Activated CD8-positive, alpha-beta T cell treated with anti-CD3 and anti-CD28 coated beads, Interleukin-2, amount 10 ng/mL, durations not matched to agents 7 days and 5 days (primary cell): ENCODE measurements at regions of chr3 and their contacts with region 1.

Region 1: GRCh38 chr3:128133273-128134084 is 9.9 kb upstream of the RUVBL1 start:
- DNase-seq: peak; percentile 60
- ATAC-seq: peak; percentile 75
- H3K4me3 Mint-ChIP-seq: no peak overlapping the region
- H3K27ac Mint-ChIP-seq: no peak overlapping the region
- H3K4me1 Mint-ChIP-seq: no peaks in the 10 kb centered on the region
- H3K27me3 Mint-ChIP-seq: peaks cover 19% of the 10 kb centered on the region

Region 2: DNA sequence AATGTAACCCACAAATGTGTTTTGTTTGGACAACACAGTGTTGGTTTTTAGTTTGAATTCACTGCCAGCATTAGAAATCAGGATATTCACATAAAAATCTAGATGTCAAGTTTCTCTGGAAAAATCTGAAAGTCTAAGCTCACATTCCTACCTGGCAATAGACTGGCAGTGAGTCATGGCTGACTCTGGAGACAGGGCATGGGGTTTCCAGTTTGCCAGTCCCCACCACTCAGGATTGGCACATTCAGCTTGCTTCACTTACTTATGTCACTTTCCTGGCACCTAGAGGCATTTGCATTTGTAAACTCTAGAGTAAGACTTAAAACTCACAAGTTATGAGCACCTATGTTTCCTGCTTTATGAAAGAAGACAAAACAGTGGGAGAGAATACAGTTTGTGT is 100.4 kb before region 1 on chr3:
- CTCF ChIA-PET with region 1: no interaction called
- POLR2A ChIA-PET with region 1: no interaction called
- DNase-seq: no peak
- ATAC-seq: no peak
- H3K4me3 Mint-ChIP-seq: no peak overlapping the region
- H3K27ac Mint-ChIP-seq: no peak overlapping the region
- H3K4me1 Mint-ChIP-seq: no peaks in the 10 kb centered on the region
- H3K27me3 Mint-ChIP-seq: peaks cover 3% of the 10 kb centered on the region

Region 3: DNA sequence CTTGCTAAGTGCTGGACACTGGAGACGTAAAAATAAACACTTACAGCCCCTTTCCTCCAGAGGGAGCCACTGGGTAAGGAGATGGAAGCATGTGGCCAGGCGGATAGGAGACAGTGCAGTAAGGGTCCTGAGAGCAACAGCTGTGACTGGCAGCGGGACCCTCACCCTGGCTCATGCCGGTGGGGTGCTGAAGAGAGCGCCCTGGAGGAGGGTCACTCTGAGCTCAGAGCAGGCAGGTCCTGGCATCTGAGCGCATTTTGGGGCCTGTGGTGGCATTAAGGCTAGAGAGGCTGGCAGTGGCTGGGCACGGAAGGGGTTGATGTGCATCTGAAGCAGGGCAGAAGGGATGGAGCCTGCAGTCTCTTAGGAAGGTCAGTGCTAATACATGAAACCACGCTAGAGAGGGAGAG is 65.3 kb before region 1 on chr3:
- CTCF ChIA-PET with region 1: interaction called, 17 read pairs
- POLR2A ChIA-PET with region 1: no interaction called
- DNase-seq: peak; percentile 44
- ATAC-seq: peak; percentile 50
- H3K4me3 Mint-ChIP-seq: no peak overlapping the region
- H3K27ac Mint-ChIP-seq: no peak overlapping the region
- H3K4me1 Mint-ChIP-seq: no peaks in the 10 kb centered on the region
- H3K27me3 Mint-ChIP-seq: no peaks in the 10 kb centered on the region

Region 4: DNA sequence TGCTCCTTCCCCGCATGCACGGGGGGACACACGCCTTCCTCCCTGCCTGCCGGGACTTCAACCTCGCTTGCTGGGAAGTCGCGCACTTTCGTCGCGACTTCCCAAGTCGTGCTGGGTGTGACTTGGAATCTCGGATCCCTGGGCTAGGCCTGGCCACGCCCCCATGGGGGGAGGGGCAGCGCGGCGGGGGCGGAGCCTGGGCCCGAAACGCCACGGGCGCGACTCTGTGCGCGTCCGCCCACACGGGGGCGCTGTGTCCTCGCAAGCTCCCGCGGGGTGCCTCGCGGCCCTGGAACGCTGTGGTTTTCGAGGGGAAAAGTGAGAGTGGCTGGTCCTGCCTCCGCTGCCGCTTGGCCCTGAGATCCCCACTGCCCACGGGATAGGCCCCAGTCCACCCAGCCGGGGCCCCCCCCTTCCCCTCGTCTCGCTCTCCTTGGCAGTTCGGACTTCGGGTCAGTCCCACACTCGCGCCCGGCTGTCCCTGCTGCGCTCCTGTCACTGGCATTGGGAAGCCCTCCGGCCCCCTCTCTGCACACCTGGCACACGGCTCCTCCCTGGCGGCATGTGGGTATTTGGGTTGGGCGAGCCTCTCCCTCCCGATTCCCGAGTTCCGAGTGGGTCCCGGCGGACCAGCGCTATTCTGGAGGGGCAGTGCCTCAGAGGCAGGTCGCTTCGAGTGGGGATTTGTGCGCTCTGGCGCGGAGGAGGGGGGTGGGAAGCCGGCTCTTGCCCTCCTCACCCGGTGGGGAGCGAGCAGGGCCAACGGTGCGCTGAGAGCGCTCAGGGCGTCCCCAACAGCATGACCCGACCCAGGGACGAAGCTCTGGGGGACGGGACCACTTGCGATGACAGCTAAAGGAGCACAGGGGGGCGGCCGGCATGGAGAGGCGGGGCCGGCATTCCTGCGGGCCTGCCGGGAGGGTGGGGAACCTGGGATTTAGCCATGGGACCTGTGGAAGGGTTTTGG is 57.7 kb before region 1 on chr3:
- CTCF ChIA-PET with region 1: interaction called, 18 read pairs
- POLR2A ChIA-PET with region 1: no interaction called
- DNase-seq: peak; percentile 84
- ATAC-seq: peak; percentile 82
- H3K4me3 Mint-ChIP-seq: peak overlapping the region; percentile 40
- H3K27ac Mint-ChIP-seq: no peak overlapping the region
- H3K4me1 Mint-ChIP-seq: peaks cover 19% of the 10 kb centered on the region
- H3K27me3 Mint-ChIP-seq: no peaks in the 10 kb centered on the region

Region 5: DNA sequence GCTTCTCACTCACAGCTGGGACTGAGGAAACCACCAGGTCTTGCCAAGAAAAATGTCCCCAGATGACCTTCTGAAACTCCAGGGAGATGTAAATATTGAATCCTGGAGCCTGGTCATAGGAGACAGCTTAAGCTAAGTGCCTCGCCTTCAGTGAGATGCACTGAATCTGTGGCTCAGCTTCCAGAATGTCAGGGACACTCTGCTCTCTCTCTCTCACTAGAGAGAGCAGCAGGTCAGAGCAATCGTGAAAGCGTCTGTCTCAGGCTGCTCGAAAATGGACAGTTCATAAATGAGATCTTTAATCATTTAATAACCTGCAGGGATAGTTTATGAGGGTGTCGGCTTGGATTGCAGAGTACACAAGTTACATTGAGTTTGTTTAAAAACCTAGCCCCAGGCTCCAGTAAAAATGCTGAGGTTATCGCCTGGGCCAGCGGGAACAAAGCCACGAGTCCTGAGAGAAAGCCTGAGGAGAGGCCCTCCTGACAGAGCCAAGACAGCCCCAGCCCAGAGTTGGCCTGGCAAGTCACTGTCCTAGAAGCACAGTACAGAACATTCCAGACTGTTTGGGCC is 49.0 kb before region 1 on chr3:
- CTCF ChIA-PET with region 1: interaction called, 19 read pairs
- POLR2A ChIA-PET with region 1: no interaction called
- DNase-seq: no peak
- ATAC-seq: no peak
- H3K4me3 Mint-ChIP-seq: no peak overlapping the region
- H3K27ac Mint-ChIP-seq: no peak overlapping the region
- H3K4me1 Mint-ChIP-seq: peaks cover 7% of the 10 kb centered on the region
- H3K27me3 Mint-ChIP-seq: no peaks in the 10 kb centered on the region

Region 6: DNA sequence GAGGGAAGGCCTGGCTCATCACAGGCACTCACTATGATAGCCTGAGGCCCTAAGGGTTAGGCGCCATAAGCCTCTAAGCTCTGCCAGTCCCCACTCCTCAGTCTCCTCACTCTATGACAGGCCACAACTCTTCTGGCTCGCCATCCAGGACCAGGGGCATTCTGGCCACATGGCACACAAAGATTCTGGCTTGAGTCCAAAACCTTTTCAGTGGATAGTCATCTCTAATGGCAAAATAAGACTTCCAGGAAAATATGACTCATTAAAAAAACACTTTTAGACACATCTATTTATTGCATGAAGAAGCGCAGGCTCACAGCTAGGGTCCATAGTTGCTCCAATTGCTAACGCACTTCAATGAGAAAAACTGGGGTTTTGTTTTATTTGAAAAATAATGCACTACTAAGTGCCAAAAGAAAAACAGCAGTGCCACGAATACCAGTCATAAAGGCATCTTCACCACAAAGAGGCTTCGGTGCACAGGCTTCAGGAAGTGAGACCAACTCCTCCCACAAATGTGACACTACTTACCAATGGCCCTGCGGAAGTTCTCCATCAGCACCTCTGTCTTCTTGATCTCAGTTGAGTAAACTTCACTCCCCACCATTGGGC is 21.0 kb before region 1 on chr3:
- CTCF ChIA-PET with region 1: interaction called, 16 read pairs
- POLR2A ChIA-PET with region 1: no interaction called
- DNase-seq: peak; percentile 73
- ATAC-seq: peak; percentile 88
- H3K4me3 Mint-ChIP-seq: peak overlapping the region; percentile 43
- H3K27ac Mint-ChIP-seq: peak overlapping the region; percentile 98
- H3K4me1 Mint-ChIP-seq: peaks cover 49% of the 10 kb centered on the region
- H3K27me3 Mint-ChIP-seq: no peaks in the 10 kb centered on the region

Region 7: GRCh38 chr3:128438488-128439072 is 305.1 kb after region 1 on chr3:
- CTCF ChIA-PET with region 1: no interaction called
- POLR2A ChIA-PET with region 1: no interaction called
- DNase-seq: no peak
- ATAC-seq: no peak
- H3K4me3 Mint-ChIP-seq: no peak overlapping the region
- H3K27ac Mint-ChIP-seq: no peak overlapping the region
- H3K4me1 Mint-ChIP-seq: no peaks in the 10 kb centered on the region
- H3K27me3 Mint-ChIP-seq: peaks cover 29% of the 10 kb centered on the region

Region 8: GRCh38 chr3:128917291-128917690 is 783.8 kb after region 1 on chr3:
- CTCF ChIA-PET with region 1: no interaction called
- POLR2A ChIA-PET with region 1: no interaction called
- DNase-seq: no peak
- ATAC-seq: no peak
- H3K4me3 Mint-ChIP-seq: no peak overlapping the region
- H3K27ac Mint-ChIP-seq: no peak overlapping the region
- H3K4me1 Mint-ChIP-seq: peaks cover 8% of the 10 kb centered on the region
- H3K27me3 Mint-ChIP-seq: no peaks in the 10 kb centered on the region